Endothelial cell of umbilical vein (primary cell): ENCODE measurements at regions of chr22 and their contacts with region 1.

Region 1: GRCh38 chr22:17057959-17058814 is 26.6 kb upstream of the IL17RA start:
- DNase-seq: peak; percentile 75
- H3K4me3 ChIP-seq: no peak overlapping the region
- H3K27ac ChIP-seq: no peak overlapping the region
- H3K4me1 ChIP-seq: peaks cover 6% of the 10 kb centered on the region
- H3K27me3 ChIP-seq: peaks cover 0 to 9% of the 10 kb centered on the region in 2 experiments
- CTCF ChIP-seq: peak; percentile 90 to 92
- POLR2A ChIP-seq: no peak

Region 2: DNA sequence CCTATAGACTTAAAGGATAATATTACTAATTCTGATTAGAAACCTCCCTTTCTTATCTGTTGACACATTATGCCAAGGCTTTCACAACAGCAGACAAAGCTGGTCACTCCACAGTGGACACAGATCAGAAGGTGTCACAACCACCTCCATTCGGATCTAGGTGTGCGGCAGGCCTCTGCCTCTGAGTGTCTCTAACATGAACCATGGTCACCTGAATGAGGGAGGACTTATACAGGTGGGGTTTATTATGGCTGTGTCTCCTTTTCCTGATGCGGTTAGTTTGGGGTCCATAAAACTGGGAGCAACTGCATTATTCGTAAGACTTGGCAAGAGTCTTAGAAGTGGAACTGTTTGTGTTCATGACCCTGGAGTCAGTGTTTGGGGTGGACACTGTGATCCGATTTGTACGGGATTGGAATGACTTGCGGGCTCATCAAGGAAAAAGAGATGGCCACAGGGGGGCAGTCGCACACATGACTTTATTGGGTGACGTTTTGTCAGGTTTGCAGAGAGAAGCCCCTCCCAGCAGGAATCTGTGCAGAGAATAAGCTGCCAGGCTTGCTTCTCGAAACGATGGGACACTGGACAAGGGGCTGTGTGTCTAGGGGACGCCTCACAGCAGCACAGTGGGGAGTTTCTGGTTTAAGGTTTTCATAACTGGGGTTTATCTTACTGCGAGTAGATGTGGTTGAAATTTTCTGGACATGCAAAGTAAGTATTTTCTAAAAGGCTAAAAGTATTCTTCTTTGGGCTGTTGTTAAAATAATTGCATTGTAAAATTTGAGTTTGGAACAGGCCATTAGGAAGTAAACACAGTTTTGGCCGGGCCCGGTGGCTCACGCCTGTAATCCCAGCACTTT is 140.8 kb before region 1 on chr22:
- CTCF ChIA-PET with region 1: interaction called, 130 read pairs
- POLR2A ChIA-PET with region 1: no interaction called
- dilution Hi-C with region 1: no loop called
- intact Hi-C with region 1: loop called (anchors 1 kb)
- DNase-seq: peak; percentile 70
- H3K4me3 ChIP-seq: no peak overlapping the region
- H3K27ac ChIP-seq: no peak overlapping the region
- H3K4me1 ChIP-seq: no peaks in the 10 kb centered on the region
- H3K27me3 ChIP-seq: peaks cover 0 to 2% of the 10 kb centered on the region in 2 experiments
- CTCF ChIP-seq: peak; percentile 59 to 64
- POLR2A ChIP-seq: no peak

Region 3: GRCh38 chr22:16932577-16932976 is 125.6 kb before region 1 on chr22:
- CTCF ChIA-PET with region 1: interaction called, 10 read pairs
- POLR2A ChIA-PET with region 1: no interaction called
- dilution Hi-C with region 1: no loop called
- intact Hi-C with region 1: no loop called
- DNase-seq: no peak
- H3K4me3 ChIP-seq: no peak overlapping the region
- H3K27ac ChIP-seq: no peak overlapping the region
- H3K4me1 ChIP-seq: no peaks in the 10 kb centered on the region
- H3K27me3 ChIP-seq: no peaks in the 10 kb centered on the region
- CTCF ChIP-seq: no peak
- POLR2A ChIP-seq: no peak

Region 4: DNA sequence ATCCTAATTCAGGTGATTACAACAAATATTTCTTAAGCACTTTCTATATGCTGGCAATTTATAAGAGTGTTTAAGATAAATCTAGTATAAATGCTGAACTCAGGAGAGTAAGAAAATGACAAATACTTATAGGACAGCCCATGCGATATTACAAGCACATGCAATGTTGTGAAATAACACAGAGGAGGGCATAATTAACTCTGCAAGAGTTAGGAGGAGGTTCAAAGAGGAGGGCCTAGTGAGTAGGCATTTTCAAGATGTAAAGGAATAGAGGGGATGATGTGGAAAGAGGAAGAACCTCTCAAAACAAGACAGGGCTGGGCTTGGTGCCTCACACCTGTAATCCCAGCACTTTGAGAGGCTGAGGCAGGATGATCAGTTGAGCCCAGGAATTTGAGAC is 10.5 kb before region 1 on chr22:
- CTCF ChIA-PET with region 1: interaction called, 17 read pairs
- POLR2A ChIA-PET with region 1: no interaction called
- dilution Hi-C with region 1: no loop called
- intact Hi-C with region 1: no loop called
- DNase-seq: no peak
- H3K4me3 ChIP-seq: no peak overlapping the region
- H3K27ac ChIP-seq: no peak overlapping the region
- H3K4me1 ChIP-seq: no peaks in the 10 kb centered on the region
- H3K27me3 ChIP-seq: no peaks in the 10 kb centered on the region
- CTCF ChIP-seq: no peak
- POLR2A ChIP-seq: no peak